Kidney (tissue), 22 donors: ENCODE measurements at regions of chr11 and their contacts with region 1.

Region 1: DNA sequence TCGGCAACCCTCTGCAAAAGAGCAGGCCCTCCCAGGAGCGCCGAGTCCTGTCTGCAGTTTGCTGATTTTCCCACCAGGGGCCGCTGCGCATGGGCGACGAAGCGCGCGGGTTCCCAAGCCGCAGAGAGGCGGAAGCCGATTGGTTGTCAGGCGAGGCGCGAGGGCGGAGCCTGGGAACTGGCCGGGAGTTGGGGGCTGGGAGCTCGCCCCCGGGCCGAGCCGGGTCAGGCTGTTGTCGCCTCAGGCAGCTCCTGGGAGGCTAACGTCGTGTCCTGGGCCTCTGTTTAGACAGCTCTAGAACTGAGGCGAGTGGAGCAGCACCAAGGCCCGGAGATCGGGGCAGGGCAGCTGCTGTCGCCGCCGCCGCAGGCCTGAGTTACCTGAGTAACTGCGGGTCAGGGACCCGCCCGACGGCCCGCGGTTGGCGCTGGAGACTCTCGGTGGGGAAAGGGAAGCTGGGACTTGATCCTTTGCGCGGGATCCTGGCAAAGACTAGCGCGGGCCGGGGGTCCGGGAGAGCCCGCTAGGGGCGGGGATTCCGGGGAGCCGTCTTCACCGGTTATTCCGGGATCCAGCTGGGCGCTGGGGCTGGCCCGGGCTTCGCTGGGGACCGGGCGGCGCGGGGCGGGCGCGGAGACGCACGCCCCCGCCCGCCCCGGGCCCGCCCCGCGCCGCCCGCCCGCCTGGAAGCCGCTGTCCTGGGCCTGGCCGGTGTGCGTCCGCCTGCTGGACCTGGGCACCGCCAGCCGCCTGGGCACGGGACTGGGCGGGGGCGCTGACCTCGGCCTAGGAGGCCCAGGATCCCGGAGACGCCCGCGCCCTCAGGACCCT is at the start of gene STIM1:
- DNase-seq: peak; percentile 96 to 98 (median 98)
- H3K4me3 ChIP-seq: peak within 1 kb of the TSS; percentile 57 to 82 (median 81)
- H3K27ac ChIP-seq: peak within 1 kb of the TSS; percentile 92 to 97
- H3K4me1 ChIP-seq: peaks cover 0 to 26% (median 17%) of the 10 kb centered on the region in 3 donors
- H3K27me3 ChIP-seq: no peaks in the 10 kb centered on the region
- CTCF ChIP-seq: peak; percentile 99
- total RNA-seq, gene STIM1: 68.0 TPM

Region 2: GRCh38 chr11:4039011-4039410 is 183.8 kb after region 1 on chr11:
- intact Hi-C with region 1: no loop called
- DNase-seq: no peak
- H3K4me3 ChIP-seq: no peak overlapping the region
- H3K27ac ChIP-seq: no peak overlapping the region
- H3K4me1 ChIP-seq: no peaks in the 10 kb centered on the region
- H3K27me3 ChIP-seq: no peaks in the 10 kb centered on the region
- CTCF ChIP-seq: no peak

Region 3: DNA sequence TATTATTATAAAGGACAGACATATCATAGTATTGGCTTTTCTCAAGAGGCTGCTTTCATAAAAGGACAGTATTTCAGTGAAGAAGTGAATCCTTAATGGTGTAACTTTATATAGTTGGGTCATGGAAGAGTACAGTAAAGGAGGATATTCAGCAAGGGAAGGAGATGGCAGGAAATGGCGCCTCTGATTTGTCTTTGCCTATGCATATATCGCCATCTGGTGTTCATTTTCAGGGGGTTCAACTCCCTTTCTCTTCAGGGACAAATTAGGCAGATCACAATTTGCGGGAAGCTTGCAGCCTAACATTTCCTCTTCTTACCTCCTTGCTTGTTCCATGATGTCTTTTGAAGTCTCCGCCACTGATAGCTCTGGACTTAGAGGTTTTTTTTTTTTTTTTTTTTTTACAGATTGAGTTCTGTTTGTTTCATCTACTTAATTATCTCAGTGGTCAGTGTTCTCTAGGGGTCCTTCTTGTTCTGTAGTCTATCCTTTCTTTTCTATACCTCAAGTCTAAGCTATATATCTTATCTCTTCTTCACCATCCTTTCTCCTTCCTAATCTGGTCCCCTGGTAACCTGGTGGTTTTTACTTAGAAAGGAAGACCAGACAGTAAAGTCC is 217.6 kb after region 1 on chr11:
- intact Hi-C with region 1: loop called (anchors 5 kb)
- DNase-seq: peak in 4 of 5 donors; percentile 63 to 91 (median 79)
- H3K4me3 ChIP-seq: no peak overlapping the region
- H3K27ac ChIP-seq: no peak overlapping the region
- H3K4me1 ChIP-seq: no peaks in the 10 kb centered on the region
- H3K27me3 ChIP-seq: no peaks in the 10 kb centered on the region
- CTCF ChIP-seq: peak; percentile 91

Region 4: DNA sequence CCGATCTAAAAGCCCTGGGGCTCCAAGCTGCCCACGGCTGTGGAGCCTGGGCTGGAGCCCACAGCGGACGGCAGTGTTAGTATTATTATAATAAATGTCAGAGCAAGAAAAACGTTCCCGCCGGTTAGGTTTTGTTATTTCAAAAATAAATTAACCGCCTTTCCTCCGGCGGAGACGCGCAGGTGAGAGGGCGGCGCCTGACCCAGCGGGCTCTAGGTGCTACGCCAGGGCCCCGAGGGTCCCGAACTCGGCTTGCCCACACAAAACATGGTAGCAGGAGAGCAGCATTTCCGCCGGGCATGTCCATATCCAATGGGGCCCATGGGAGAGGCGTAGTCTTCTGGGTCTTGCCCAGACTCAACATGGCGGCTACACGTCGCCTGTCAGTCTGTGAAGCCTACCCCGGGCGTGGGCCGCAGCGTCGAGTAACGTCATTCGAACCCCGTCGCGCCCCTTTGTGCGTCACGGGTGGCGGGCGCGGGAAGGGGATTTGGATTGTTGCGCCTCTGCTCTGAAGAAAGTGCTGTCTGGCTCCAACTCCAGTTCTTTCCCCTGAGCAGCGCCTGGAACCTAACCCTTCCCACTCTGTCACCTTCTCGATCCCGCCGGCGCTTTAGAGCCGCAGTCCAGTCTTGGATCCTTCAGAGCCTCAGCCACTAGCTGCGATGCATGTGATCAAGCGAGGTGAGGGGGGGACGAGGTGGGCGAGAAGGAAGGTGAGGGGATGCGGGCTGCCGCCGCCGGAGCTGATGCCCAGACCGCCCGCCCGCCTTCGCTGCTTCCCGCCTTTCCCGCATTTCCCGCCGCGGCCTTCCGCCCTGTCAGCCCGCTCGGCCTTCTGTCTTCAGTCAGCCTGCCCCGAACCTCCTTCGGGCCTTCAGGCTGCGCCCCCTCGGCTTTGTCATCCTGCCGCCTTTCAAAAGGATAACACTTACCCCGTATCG is 239.4 kb after region 1 on chr11 and contains the start of gene RRM1:
- intact Hi-C with region 1: no loop called
- DNase-seq: peak; percentile 98 to 99 (median 98)
- H3K4me3 ChIP-seq: peak within 1 kb of the TSS; percentile 76 to 89 (median 78)
- H3K27ac ChIP-seq: peak within 1 kb of the TSS; percentile 82 to 87
- H3K4me1 ChIP-seq: peaks cover 0 to 6% (median 0%) of the 10 kb centered on the region in 3 donors
- H3K27me3 ChIP-seq: no peaks in the 10 kb centered on the region
- CTCF ChIP-seq: no peak
- total RNA-seq, gene RRM1: 33.0 TPM